Thyroid gland (tissue), 4 donors: ENCODE measurements at regions of chr3 and their contacts with region 1.

Region 1: GRCh38 chr3:49841126-49841696 is 15.2 kb downstream of the TRAIP start:
- DNase-seq: no peak
- H3K4me3 ChIP-seq: no peak overlapping the region
- H3K27ac ChIP-seq: no peak overlapping the region
- H3K4me1 ChIP-seq: peaks cover 6 to 15% of the 10 kb centered on the region in 2 donors
- H3K27me3 ChIP-seq: no peaks in the 10 kb centered on the region
- CTCF ChIP-seq: peak in 1 of 6 experiments; percentile 7
- POLR2A ChIP-seq: no peak

Region 2: GRCh38 chr3:49703443-49703927 is 137.7 kb before region 1 on chr3:
- intact Hi-C with region 1: loop called (anchors 5 kb)
- DNase-seq: peak; percentile 62 to 64
- H3K4me3 ChIP-seq: no peak overlapping the region
- H3K27ac ChIP-seq: no peak overlapping the region
- H3K4me1 ChIP-seq: no peaks in the 10 kb centered on the region
- H3K27me3 ChIP-seq: no peaks in the 10 kb centered on the region
- CTCF ChIP-seq: peak in 5 of 6 experiments; percentile 60 to 79 (median 68)
- POLR2A ChIP-seq: no peak

Region 3: GRCh38 chr3:49802719-49803464 is 38.3 kb before region 1 on chr3 and contains the start of gene INKA1:
- intact Hi-C with region 1: loop called (anchors 2 kb)
- DNase-seq: peak; percentile 90 to 91
- H3K4me3 ChIP-seq: peak within 1 kb of the TSS; percentile 60 to 72 (median 60)
- H3K27ac ChIP-seq: peak within 1 kb of the TSS; percentile 50 to 96 (median 85)
- H3K4me1 ChIP-seq: peaks cover 12 to 37% of the 10 kb centered on the region in 2 donors
- H3K27me3 ChIP-seq: no peaks in the 10 kb centered on the region
- CTCF ChIP-seq: peak in 5 of 6 experiments; percentile 59 to 96 (median 79)
- POLR2A ChIP-seq: peak in 1 of 2 donors; percentile 52
- total RNA-seq, gene INKA1: 3.1 to 7.3 (median 5.6) TPM